Pancreas (tissue), 10 donors: ENCODE measurements at regions of chr19 and their contacts with region 1.

Region 1: DNA sequence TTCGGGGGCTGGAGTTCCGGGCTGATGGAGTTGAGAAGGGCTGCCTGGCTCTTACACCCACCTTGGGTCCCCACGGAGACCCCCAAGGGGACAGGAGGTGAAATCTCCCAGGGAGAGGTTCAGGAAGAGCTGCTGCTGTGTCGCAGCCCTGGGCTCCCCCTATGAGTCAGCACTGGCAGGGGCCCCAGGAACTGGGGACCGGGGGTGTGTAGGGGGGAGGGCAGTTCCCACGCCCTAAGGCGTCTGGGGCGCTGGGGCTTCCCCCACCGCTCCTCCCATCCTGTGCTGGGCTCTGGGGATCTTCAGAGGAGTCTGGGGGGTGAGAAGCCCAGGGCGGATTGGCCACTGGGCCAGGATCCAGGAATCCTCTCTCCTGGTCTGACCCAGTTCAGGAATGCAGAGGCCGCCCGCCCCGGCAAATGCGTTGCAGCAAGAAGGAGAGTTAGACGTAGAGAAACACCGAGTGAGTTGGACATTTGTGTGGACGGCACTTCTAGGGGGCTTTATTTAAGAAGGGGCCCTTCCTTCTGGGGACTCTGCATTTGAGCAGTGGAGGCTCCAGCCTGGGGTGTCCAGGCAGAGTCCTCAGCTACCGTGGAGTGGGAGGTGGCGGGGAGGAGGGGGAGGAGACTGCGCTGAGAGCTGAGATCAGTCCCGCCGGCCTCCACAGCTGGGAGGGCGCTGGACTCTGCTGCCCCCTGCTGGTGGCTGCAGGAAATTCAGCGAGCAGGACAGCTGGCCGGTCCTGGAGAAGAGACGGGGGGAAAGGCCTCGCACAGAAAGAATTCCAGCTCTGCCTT is 15.0 kb upstream of the NANOS3 start:
- DNase-seq: peak; percentile 89 to 99 (median 95)
- ATAC-seq: peak; percentile 84 to 93 (median 90)
- H3K4me3 ChIP-seq: peak overlapping the region; percentile 14 to 42 (median 28)
- H3K27ac ChIP-seq: peak overlapping the region; percentile 59 to 87 (median 75)
- H3K4me1 ChIP-seq: peaks cover 3 to 8% (median 5%) of the 10 kb centered on the region in 3 donors
- H3K27me3 ChIP-seq: no peaks in the 10 kb centered on the region
- CTCF ChIP-seq: peak; percentile 97 to 100 (median 98)

Region 2: GRCh38 chr19:13784731-13785452 is 77.0 kb before region 1 on chr19:
- intact Hi-C with region 1: loop called in 2 of 3 experiments (anchors 5 kb)
- DNase-seq: peak; percentile 73 to 89 (median 84)
- ATAC-seq: peak; percentile 82 to 91 (median 84)
- H3K4me3 ChIP-seq: peak overlapping the region in 1 of 4 donors; percentile 1
- H3K27ac ChIP-seq: peak overlapping the region in 1 of 4 donors; percentile 14
- H3K4me1 ChIP-seq: peaks cover 0 to 9% (median 0%) of the 10 kb centered on the region in 3 donors
- H3K27me3 ChIP-seq: no peaks in the 10 kb centered on the region
- CTCF ChIP-seq: peak; percentile 20 to 59 (median 41)